HepG2 (cell line): ENCODE measurements at regions of chr14 and their contacts with region 1.

Region 1: GRCh38 chr14:75088574-75089373 is 19.3 kb downstream of the ZC2HC1C start:
- DNase-seq: peak; percentile 62
- ATAC-seq: peak; percentile 87
- H3K4me3 ChIP-seq: no peak overlapping the region
- H3K27ac ChIP-seq: no peak overlapping the region
- H3K4me1 ChIP-seq: no peaks in the 10 kb centered on the region
- H3K27me3 ChIP-seq: no peaks in the 10 kb centered on the region
- CTCF ChIP-seq: peak; percentile 88
- EP300 ChIP-seq: no peak
- POLR2A ChIP-seq: no peak
- RAD21 ChIP-seq: peak; percentile 84

Region 2: GRCh38 chr14:73443758-73444157 is 1645.0 kb before region 1 on chr14:
- CTCF ChIA-PET with region 1: no interaction called
- POLR2A ChIA-PET with region 1: no interaction called
- in situ Hi-C with region 1: no loop called
- intact Hi-C with region 1: no loop called
- DNase-seq: peak; percentile 35
- ATAC-seq: peak; percentile 38; the same call in 2 of the 3 replicates
- H3K4me3 ChIP-seq: no peak overlapping the region
- H3K27ac ChIP-seq: peak overlapping the region; percentile 52
- H3K4me1 ChIP-seq: peaks cover 20% of the 10 kb centered on the region
- H3K27me3 ChIP-seq: no peaks in the 10 kb centered on the region
- CTCF ChIP-seq: no peak
- EP300 ChIP-seq: no peak
- POLR2A ChIP-seq: no peak
- RAD21 ChIP-seq: no peak

Region 3: GRCh38 chr14:74913986-74914573 is 174.7 kb before region 1 on chr14:
- CTCF ChIA-PET with region 1: interaction called, 44 read pairs
- POLR2A ChIA-PET with region 1: no interaction called
- in situ Hi-C with region 1: loop called (anchors 5 kb)
- intact Hi-C with region 1: loop called (anchors 1 kb)
- DNase-seq: peak; percentile 62
- ATAC-seq: peak; percentile 87
- H3K4me3 ChIP-seq: no peak overlapping the region
- H3K27ac ChIP-seq: no peak overlapping the region
- H3K4me1 ChIP-seq: peaks cover 11% of the 10 kb centered on the region; the same call in 1 of the 2 replicates
- H3K27me3 ChIP-seq: no peaks in the 10 kb centered on the region
- CTCF ChIP-seq: peak; percentile 90
- EP300 ChIP-seq: no peak
- POLR2A ChIP-seq: no peak
- RAD21 ChIP-seq: peak; percentile 85

Region 4: DNA sequence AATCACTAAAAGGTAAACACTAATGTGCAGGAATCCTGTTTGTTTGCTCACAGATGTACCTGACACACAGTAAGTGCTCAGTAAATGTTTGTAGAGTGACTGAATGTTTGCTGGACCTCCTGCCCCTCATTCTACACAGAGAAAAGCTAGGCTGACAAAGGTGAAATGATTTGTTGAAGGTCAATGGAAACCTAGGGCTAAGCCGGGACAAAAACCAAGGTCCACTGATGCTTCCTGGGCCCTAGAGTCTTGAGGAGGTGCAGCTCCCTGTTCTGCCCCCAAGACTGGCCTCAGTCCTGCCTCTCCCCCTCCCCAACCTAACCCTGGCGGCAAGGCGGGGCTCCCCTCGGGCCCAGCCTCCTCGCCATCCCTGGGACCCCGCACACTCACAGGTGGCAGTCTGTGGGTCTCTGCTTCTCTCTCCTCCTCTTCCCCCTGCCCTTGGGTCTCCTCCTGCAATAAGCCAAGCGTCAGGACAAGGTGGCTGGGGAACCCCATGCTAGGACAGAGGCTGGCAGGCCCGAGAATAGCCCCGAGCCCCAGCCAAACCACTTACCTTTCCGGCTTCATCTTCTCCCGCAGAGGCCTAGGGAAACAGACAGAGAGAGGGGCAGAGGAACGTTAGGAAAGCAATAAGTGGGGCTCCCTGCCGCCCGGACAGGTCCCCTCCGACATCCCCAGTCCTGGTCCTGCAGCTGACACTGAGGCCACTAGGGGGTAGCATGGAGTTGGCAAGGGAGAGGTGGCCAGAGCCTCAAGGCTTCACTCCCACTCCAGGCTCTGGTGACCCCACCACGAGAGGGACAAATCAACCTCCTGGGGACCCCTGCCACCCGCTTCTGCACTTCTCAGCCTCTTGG is 142.7 kb before region 1 on chr14:
- CTCF ChIA-PET with region 1: interaction called, 11 read pairs
- POLR2A ChIA-PET with region 1: interaction called, 3 read pairs
- in situ Hi-C with region 1: no loop called
- intact Hi-C with region 1: loop called (anchors 1 kb)
- DNase-seq: peak; percentile 84
- ATAC-seq: peak; percentile 86
- H3K4me3 ChIP-seq: no peak overlapping the region
- H3K27ac ChIP-seq: peak overlapping the region; percentile 66
- H3K4me1 ChIP-seq: peaks cover 36% of the 10 kb centered on the region
- H3K27me3 ChIP-seq: no peaks in the 10 kb centered on the region
- CTCF ChIP-seq: peak; percentile 94
- EP300 ChIP-seq: peak in 1 of 2 experiments; percentile 84; a peak in 2 of 4 replicates
- POLR2A ChIP-seq: 0 out of 4 replicates have a peak, but pooled peaks of 1 of the 2 experiments have one; percentile 13
- RAD21 ChIP-seq: peak; percentile 82

Region 5: GRCh38 chr14:75373616-75374015 is 284.8 kb after region 1 on chr14:
- CTCF ChIA-PET with region 1: no interaction called
- POLR2A ChIA-PET with region 1: no interaction called
- in situ Hi-C with region 1: no loop called
- intact Hi-C with region 1: no loop called
- DNase-seq: no peak
- ATAC-seq: no peak
- H3K4me3 ChIP-seq: no peak overlapping the region
- H3K27ac ChIP-seq: no peak overlapping the region
- H3K4me1 ChIP-seq: no peaks in the 10 kb centered on the region
- H3K27me3 ChIP-seq: peaks cover 0 to 2% of the 10 kb centered on the region in 2 experiments; a peak in 1 of 5 replicates
- CTCF ChIP-seq: no peak
- EP300 ChIP-seq: no peak
- POLR2A ChIP-seq: no peak
- RAD21 ChIP-seq: no peak